ENCODE measurements at regions of chr15 and their contacts with region 1.

Region 1: DNA sequence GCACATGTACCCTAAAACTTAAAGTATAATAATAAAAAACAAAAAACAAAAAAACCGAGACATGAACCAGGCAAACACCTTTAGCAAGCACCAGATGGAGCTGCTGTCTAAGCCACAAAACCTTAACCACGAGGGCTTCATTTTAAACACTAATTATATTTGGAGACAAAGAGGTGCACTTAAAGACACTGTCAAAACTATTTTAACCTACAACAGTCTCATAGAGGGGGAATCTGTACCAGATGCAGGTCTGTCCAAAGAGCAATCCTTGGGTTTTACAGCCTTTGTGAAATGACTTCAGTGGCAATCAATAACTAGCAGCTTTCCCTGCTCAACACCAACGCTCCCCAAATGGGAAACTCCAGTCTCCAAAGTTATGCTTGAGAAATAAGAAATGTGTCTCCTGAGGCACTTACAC is 115.7 kb upstream of the TSPAN3 start:
- DNase-seq: peak; percentile 18
- H3K4me3 Mint-ChIP-seq: no peak overlapping the region
- H3K27ac Mint-ChIP-seq: no peak overlapping the region
- H3K4me1 Mint-ChIP-seq: peaks cover 39% of the 10 kb centered on the region
- H3K27me3 Mint-ChIP-seq: no peaks in the 10 kb centered on the region
- CTCF ChIP-seq: no peak

Region 2: DNA sequence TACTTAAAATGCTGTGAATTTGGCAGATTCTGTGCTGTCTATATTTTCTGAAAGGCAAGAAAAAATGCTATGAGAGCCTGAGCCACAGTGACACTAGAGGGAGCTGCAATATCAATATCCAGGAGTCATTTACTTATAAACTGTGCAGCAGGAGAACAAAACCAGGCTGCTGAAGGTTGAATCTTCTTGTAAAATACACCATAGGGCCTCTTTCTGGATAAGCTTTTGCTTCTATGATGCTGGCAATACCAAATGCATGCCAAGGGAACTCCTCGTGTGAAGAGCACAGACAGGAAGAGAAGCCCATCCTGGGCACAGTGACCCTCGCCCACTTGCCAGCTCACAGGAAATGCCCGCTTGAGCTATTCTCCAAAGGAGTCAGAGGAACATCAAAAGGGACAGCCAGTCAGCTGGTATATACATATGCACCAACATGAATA is 67.7 kb before region 1 on chr15:
- CTCF ChIA-PET with region 1: interaction called, 16 read pairs
- intact Hi-C with region 1: loop called (anchors 1 kb)
- DNase-seq: peak; percentile 51
- H3K4me3 Mint-ChIP-seq: no peak overlapping the region
- H3K27ac Mint-ChIP-seq: no peak overlapping the region
- H3K4me1 Mint-ChIP-seq: peaks cover 19% of the 10 kb centered on the region
- H3K27me3 Mint-ChIP-seq: no peaks in the 10 kb centered on the region
- CTCF ChIP-seq: peak; percentile 71

Region 3: GRCh38 chr15:77419836-77420609 is 233.4 kb after region 1 on chr15 and contains the start of gene PEAK1:
- CTCF ChIA-PET with region 1: interaction called, 3 read pairs
- intact Hi-C with region 1: loop called (anchors 1 kb)
- DNase-seq: peak; percentile 100
- H3K4me3 Mint-ChIP-seq: peak within 1 kb of the TSS; percentile 85
- H3K27ac Mint-ChIP-seq: peak within 1 kb of the TSS; percentile 95
- H3K4me1 Mint-ChIP-seq: peaks cover 27% of the 10 kb centered on the region
- H3K27me3 Mint-ChIP-seq: no peaks in the 10 kb centered on the region
- CTCF ChIP-seq: no peak
- total RNA-seq, gene PEAK1: 51.7 and 54.3 TPM in 2 replicates